Uterus (tissue), 4 donors: ENCODE measurements at regions of chr15 and their contacts with region 1.

Region 1: DNA sequence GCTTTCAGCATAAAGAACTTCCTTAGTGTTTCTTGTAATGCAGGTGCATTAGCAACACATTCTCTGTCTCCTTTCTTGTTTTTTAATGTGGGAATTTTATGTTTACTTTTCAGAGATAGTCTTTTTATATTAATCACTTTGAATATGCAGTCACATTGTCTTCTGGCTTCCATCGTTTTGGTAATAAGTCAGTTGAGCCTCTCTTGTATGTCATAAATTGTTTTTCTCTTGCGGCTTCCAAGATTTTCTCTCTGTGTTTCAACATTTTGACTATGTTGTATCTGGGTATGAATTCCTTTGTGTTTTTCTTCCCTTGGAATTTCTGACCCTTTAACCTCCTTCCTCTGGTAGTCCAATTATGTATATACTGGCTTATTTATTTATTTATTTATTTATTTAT is 25.3 kb downstream of the GABRG3 start:
- DNase-seq: no peak
- H3K4me3 ChIP-seq: no peak overlapping the region
- H3K27ac ChIP-seq: no peak overlapping the region
- H3K4me1 ChIP-seq: no peaks in the 10 kb centered on the region
- H3K27me3 ChIP-seq: no peaks in the 10 kb centered on the region
- CTCF ChIP-seq: no peak
- POLR2A ChIP-seq: no peak

Region 2: DNA sequence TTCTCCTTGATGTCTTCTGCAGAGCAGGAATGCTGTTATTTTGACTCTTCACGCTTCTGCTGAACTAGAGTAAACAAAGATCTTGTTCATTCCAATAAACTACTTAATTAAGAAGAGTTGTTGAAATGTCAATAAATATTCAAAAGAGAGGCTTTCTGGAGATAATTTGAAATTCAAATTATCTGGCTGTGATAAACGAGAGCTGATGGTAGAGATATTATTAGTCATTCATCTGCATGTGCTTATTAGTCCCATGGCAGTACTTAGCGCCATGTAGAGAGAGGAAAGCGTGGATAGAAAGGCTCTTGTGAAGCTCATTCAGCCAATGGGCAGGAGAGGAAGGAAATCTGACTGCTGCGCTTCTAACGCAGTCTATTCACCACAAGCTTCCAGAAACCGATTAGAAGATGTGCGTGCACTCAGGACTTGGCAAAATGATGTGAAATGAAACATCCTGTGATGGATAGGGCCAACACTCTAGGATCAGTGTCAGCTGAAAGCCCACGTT is 474.5 kb before region 1 on chr15:
- intact Hi-C with region 1: no loop called
- DNase-seq: no peak
- H3K4me3 ChIP-seq: no peak overlapping the region
- H3K27ac ChIP-seq: no peak overlapping the region
- H3K4me1 ChIP-seq: no peaks in the 10 kb centered on the region
- H3K27me3 ChIP-seq: no peaks in the 10 kb centered on the region
- CTCF ChIP-seq: no peak
- POLR2A ChIP-seq: no peak

Region 3: GRCh38 chr15:26950001-26950400 is 46.2 kb before region 1 on chr15:
- intact Hi-C with region 1: loop called (anchors 2 kb)
- DNase-seq: no peak
- H3K4me3 ChIP-seq: no peak overlapping the region
- H3K27ac ChIP-seq: no peak overlapping the region
- H3K4me1 ChIP-seq: no peaks in the 10 kb centered on the region
- H3K27me3 ChIP-seq: no peaks in the 10 kb centered on the region
- CTCF ChIP-seq: no peak
- POLR2A ChIP-seq: no peak